ENCODE measurements at regions of chr9 and their contacts with region 1.

Region 1: GRCh38 chr9:134443168-134444037 is 117.1 kb downstream of the RXRA start:
- DNase-seq: peak; percentile 81
- H3K4me3 Mint-ChIP-seq: no peak overlapping the region
- H3K27ac Mint-ChIP-seq: no peak overlapping the region
- H3K4me1 Mint-ChIP-seq: peaks cover 5% of the 10 kb centered on the region
- H3K27me3 Mint-ChIP-seq: peaks cover 8% of the 10 kb centered on the region

Region 2: GRCh38 chr9:134170532-134171315 is 272.7 kb before region 1 on chr9:
- intact Hi-C with region 1: loop called (anchors 1 kb)
- DNase-seq: no peak
- H3K4me3 Mint-ChIP-seq: no peak overlapping the region
- H3K27ac Mint-ChIP-seq: no peak overlapping the region
- H3K4me1 Mint-ChIP-seq: no peaks in the 10 kb centered on the region
- H3K27me3 Mint-ChIP-seq: no peaks in the 10 kb centered on the region

Region 3: GRCh38 chr9:134364391-134365114 is 78.8 kb before region 1 on chr9:
- intact Hi-C with region 1: loop called (anchors 1 kb)
- DNase-seq: no peak
- H3K4me3 Mint-ChIP-seq: no peak overlapping the region
- H3K27ac Mint-ChIP-seq: no peak overlapping the region
- H3K4me1 Mint-ChIP-seq: no peaks in the 10 kb centered on the region
- H3K27me3 Mint-ChIP-seq: no peaks in the 10 kb centered on the region

Region 4: GRCh38 chr9:134391314-134392231 is 51.8 kb before region 1 on chr9:
- intact Hi-C with region 1: loop called (anchors 5 kb)
- DNase-seq: peak; percentile 55
- H3K4me3 Mint-ChIP-seq: peak overlapping the region; percentile 78
- H3K27ac Mint-ChIP-seq: peak overlapping the region; percentile 92
- H3K4me1 Mint-ChIP-seq: peaks cover 44% of the 10 kb centered on the region
- H3K27me3 Mint-ChIP-seq: peaks cover 7% of the 10 kb centered on the region

Region 5: GRCh38 chr9:134407123-134407808 is 36.1 kb before region 1 on chr9:
- intact Hi-C with region 1: loop called (anchors 5 kb)
- DNase-seq: peak; percentile 77
- H3K4me3 Mint-ChIP-seq: peak overlapping the region; percentile 55
- H3K27ac Mint-ChIP-seq: no peak overlapping the region
- H3K4me1 Mint-ChIP-seq: peaks cover 29% of the 10 kb centered on the region
- H3K27me3 Mint-ChIP-seq: peaks cover 4% of the 10 kb centered on the region

Measured in activated T-helper 2 cell treated with anti-CD3 and anti-CD28 coated beads, Interferon-gamma antibody, Interleukin-2, Interleukin-4, amounts not matched to agents 10 μg/mL and 5 μg/mL and 100 μg/mL, durations not matched to agents 14 hours and 24 hours and 36 hours (primary cell).